K562 (cell line): ENCODE measurements at regions of chr2 and their contacts with region 1.

Region 1: GRCh38 chr2:44087036-44087713 is 81.5 kb upstream of the PPM1B start:
- DNase-seq: peak; percentile 83 to 91 (median 88)
- ATAC-seq: peak; percentile 96
- H3K4me3 ChIP-seq: peak overlapping the region; percentile 28
- H3K27ac ChIP-seq: no peak overlapping the region
- H3K4me1 ChIP-seq: peaks cover 3 to 5% of the 10 kb centered on the region in 2 experiments; a peak in 2 of 5 replicates
- H3K27me3 ChIP-seq: peaks cover 10 to 17% of the 10 kb centered on the region in 2 experiments; a peak in 4 of 5 replicates
- CTCF ChIP-seq: peak; percentile 92 to 95 (median 95)
- EP300 ChIP-seq: no peak
- POLR2A ChIP-seq: no peak
- RAD21 ChIP-seq: peak; percentile 90 to 91

Region 2: GRCh38 chr2:43995733-43996533 is 91.2 kb before region 1 on chr2 and contains the start of gene LRPPRC:
- CTCF ChIA-PET with region 1: no interaction called
- POLR2A ChIA-PET with region 1: no interaction called
- in situ Hi-C with region 1: no loop called
- intact Hi-C with region 1: no loop called
- DNase-seq: peak; percentile 91 to 97 (median 94)
- ATAC-seq: peak; percentile 96
- H3K4me3 ChIP-seq: peak within 1 kb of the TSS; percentile 99
- H3K27ac ChIP-seq: peak within 1 kb of the TSS; percentile 96
- H3K4me1 ChIP-seq: peaks cover 8 to 19% of the 10 kb centered on the region in 2 experiments; a peak in 4 of 5 replicates
- H3K27me3 ChIP-seq: no peaks in the 10 kb centered on the region; a peak in 1 of 5 replicates
- CTCF ChIP-seq: no peak; a peak in 1 of 6 replicates
- EP300 ChIP-seq: no peak
- POLR2A ChIP-seq: peak; percentile 91
- RAD21 ChIP-seq: no peak
- polyA plus RNA-seq, gene LRPPRC: 41.5 to 54.8 TPM

Region 3: GRCh38 chr2:44291281-44292248 is 204.4 kb after region 1 on chr2:
- CTCF ChIA-PET with region 1: interaction called, 13 read pairs
- POLR2A ChIA-PET with region 1: no interaction called
- in situ Hi-C with region 1: no loop called
- intact Hi-C with region 1: loop called (anchors 1 kb)
- DNase-seq: peak in 3 of 4 experiments; percentile 14 to 45 (median 28)
- ATAC-seq: peak; percentile 89
- H3K4me3 ChIP-seq: no peak overlapping the region
- H3K27ac ChIP-seq: no peak overlapping the region
- H3K4me1 ChIP-seq: peaks cover 0 to 2% of the 10 kb centered on the region in 2 experiments; a peak in 1 of 5 replicates
- H3K27me3 ChIP-seq: peaks cover 13 to 37% of the 10 kb centered on the region in 2 experiments
- CTCF ChIP-seq: peak; percentile 49 to 76 (median 66); a peak in 5 of 6 replicates
- EP300 ChIP-seq: no peak
- POLR2A ChIP-seq: no peak
- RAD21 ChIP-seq: peak; percentile 86 to 87